ENCODE measurements at regions of chr14 and their contacts with region 1.

Region 1: DNA sequence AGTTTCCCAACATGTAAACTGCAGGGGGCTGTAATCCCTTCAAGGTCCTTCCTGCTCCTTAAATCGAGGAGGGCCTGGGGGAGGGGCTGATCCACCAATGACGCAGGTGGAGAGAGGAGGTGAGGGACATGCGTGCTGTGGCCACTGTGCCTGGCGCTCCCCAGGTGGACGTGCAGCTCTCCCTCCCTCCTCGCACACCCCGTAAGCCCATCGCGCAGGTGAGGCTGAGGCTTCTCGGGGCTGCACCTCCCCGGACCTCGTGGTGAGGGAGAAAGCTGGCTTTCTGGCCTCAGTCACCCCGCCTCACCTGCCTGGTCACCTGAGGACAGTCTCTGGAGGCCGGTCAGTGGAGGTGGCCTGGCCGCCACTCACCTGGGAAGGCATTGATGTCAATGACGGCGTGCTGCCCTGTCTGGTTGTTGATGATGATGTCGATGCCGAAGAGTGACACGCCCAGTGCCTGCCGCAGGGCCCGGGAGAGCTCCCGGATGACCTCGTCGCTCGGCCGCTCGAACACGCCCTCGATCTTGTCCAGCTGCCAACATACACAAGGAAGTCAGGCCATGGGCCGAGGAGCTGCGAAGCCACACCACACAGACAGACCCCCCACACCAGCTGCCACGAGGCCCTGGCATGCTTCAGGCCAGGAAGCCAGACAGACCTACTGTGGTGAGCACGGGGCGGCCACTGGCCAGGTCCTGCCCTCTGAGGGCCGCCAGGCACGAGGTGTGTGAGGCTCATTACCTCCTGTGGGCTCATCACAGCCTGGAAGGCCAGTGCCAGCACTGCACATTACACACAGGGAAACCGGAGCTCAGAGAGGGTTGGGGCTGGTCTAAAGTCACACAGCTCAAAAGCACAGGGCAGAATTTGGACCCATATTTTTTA is 23.3 kb downstream of the CHGA start:
- DNase-seq: no peak
- CTCF ChIP-seq: no peak

Region 2: DNA sequence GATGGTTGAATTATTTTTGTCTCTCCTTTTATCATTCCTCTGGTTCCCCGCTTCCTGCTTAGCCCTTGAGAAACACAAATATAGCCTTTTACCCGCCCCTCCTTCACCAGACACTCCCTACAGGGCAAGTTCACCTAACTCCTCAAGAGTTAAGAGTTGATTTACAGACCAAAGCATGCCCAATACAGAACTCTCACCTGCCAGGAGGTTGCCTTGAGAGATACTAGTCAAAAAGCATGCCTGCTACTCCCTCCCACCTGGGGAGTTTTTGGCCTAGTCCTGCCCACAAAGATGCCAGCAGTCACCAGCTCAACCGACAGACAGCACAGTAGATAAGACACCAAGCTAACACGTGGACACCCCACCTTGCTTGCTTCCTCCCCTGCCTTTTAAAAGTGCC is 209.0 kb before region 1 on chr14:
- in situ Hi-C with region 1: no loop called
- DNase-seq: no peak
- CTCF ChIP-seq: no peak

Region 3: DNA sequence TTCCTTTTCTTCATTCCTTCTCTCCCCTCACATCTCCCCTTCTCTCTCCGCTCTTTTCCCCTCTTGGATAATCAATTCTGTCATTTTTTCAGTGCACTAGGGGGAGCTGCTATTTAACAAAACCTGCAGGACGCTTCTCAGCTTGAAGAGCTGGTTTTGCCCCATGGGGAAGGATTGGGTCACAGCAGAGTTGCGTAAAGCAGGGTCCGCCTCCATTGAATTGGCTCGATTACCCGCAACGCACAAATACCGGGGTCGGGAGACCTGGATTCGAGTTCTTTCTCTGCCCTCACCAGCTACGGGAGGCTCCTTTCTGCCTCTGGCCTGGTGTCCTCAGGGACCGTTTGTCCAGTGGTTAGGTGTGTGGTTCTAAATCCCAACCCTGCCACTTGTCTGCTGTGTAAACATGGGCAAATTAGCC is 65.3 kb before region 1 on chr14:
- in situ Hi-C with region 1: no loop called
- DNase-seq: no peak
- CTCF ChIP-seq: no peak

Region 4: GRCh38 chr14:93142854-93143652 is 196.8 kb after region 1 on chr14:
- in situ Hi-C with region 1: loop called (anchors 5 kb)
- DNase-seq: no peak
- CTCF ChIP-seq: no peak

Region 5: DNA sequence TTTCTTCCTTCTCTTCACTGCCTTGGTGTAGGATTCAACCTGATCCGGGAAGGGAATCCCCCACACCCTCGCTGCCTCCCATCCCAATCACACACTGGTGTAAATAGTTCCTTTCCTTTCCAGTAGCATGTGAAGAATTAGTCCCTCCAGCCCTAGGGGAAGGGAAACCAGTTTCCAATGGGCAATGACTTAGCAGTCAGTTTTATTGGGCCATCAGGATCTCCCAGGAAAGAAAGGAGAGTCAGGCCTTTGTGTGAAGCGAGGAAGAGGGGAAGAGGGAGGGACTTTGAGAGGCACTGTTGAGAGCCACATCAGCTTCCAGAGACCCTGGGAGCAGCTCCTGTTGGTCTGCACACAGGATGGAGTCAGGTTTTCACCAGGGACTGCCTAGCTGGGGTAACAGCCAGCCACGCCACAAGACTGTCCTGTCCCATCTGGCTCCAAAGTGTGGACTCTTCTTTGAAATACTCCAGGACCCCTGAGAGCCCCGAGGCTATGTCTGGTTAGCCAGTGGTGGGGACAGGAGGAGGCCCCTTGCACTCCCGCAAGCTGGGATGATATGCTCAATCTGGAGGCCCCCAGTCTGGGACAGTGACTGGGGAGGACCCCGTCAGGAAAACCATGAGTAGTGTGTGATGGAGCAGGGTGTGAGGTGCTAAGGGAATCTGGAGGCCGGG is 210.6 kb after region 1 on chr14:
- in situ Hi-C with region 1: no loop called
- DNase-seq: peak; percentile 1
- CTCF ChIP-seq: no peak